ENCODE measurements at regions of chr5 and their contacts with region 1.

Region 1: GRCh38 chr5:78527054-78527859 is 121.3 kb downstream of the LHFPL2 start:
- DNase-seq: peak; percentile 87
- H3K4me3 Mint-ChIP-seq: peak overlapping the region; percentile 55
- H3K27ac Mint-ChIP-seq: peak overlapping the region; percentile 99
- H3K4me1 Mint-ChIP-seq: peaks cover 64% of the 10 kb centered on the region
- H3K27me3 Mint-ChIP-seq: no peaks in the 10 kb centered on the region
- CTCF ChIP-seq: no peak

Region 2: GRCh38 chr5:78467752-78468357 is 59.4 kb before region 1 on chr5:
- CTCF ChIA-PET with region 1: interaction called, 6 read pairs
- POLR2A ChIA-PET with region 1: interaction called, 3 read pairs
- intact Hi-C with region 1: loop called (anchors 2 kb)
- DNase-seq: peak; percentile 50
- H3K4me3 Mint-ChIP-seq: no peak overlapping the region
- H3K27ac Mint-ChIP-seq: no peak overlapping the region
- H3K4me1 Mint-ChIP-seq: peaks cover 5% of the 10 kb centered on the region
- H3K27me3 Mint-ChIP-seq: no peaks in the 10 kb centered on the region
- CTCF ChIP-seq: peak; percentile 70

Region 3: GRCh38 chr5:78504704-78505677 is 22.3 kb before region 1 on chr5:
- CTCF ChIA-PET with region 1: interaction called, 6 read pairs
- POLR2A ChIA-PET with region 1: interaction called, 18 read pairs
- intact Hi-C with region 1: loop called (anchors 2 kb)
- DNase-seq: peak; percentile 98
- H3K4me3 Mint-ChIP-seq: peak overlapping the region; percentile 3
- H3K27ac Mint-ChIP-seq: peak overlapping the region; percentile 96
- H3K4me1 Mint-ChIP-seq: peaks cover 41% of the 10 kb centered on the region
- H3K27me3 Mint-ChIP-seq: no peaks in the 10 kb centered on the region
- CTCF ChIP-seq: no peak

Region 4: GRCh38 chr5:78677777-78678668 is 150.8 kb after region 1 on chr5:
- CTCF ChIA-PET with region 1: no interaction called
- POLR2A ChIA-PET with region 1: no interaction called
- intact Hi-C with region 1: no loop called
- DNase-seq: peak; percentile 77
- H3K4me3 Mint-ChIP-seq: no peak overlapping the region
- H3K27ac Mint-ChIP-seq: peak overlapping the region; percentile 85
- H3K4me1 Mint-ChIP-seq: peaks cover 25% of the 10 kb centered on the region
- H3K27me3 Mint-ChIP-seq: no peaks in the 10 kb centered on the region
- CTCF ChIP-seq: no peak

Region 5: DNA sequence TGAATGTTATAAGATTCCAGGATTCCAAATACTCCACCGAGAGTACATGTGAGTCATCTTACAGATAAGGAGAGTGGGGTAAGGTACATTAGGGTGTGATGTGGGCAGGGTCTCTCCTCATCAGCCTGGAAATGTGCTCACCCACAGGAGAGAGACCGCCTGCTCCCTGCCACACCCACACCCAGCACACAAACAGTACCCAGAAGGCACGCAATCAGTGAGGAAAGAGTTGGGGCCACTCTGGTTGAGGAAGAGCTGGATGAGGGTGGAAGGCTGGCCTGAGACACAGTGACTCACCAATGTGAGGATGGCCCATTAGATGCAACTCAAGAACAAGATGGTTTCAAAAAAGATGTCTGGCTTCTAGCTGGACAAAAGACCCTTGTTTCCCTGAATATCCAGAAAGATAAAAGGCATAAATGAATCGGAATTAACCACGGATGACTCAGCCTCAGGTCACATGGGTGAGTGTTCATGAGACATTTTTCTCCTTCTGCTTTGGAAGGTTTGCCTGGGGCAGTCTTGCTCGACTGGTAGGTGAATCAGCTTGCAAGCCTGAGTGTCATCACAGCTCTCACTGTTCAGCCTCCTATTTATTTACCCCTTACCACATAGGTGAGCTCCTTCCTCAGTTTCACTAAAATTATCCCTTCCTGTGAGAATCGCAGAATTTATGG is 172.4 kb after region 1 on chr5:
- CTCF ChIA-PET with region 1: interaction called, 3 read pairs
- POLR2A ChIA-PET with region 1: interaction called, 20 read pairs
- intact Hi-C with region 1: no loop called
- DNase-seq: peak; percentile 99
- H3K4me3 Mint-ChIP-seq: peak overlapping the region; percentile 75
- H3K27ac Mint-ChIP-seq: peak overlapping the region; percentile 98
- H3K4me1 Mint-ChIP-seq: peaks cover 38% of the 10 kb centered on the region
- H3K27me3 Mint-ChIP-seq: no peaks in the 10 kb centered on the region
- CTCF ChIP-seq: no peak